Activated B cell treated with CpG ODN at 0.5 μM for 24 hours (primary cell): ENCODE measurements at regions of chr11 and their contacts with region 1.

Region 1: DNA sequence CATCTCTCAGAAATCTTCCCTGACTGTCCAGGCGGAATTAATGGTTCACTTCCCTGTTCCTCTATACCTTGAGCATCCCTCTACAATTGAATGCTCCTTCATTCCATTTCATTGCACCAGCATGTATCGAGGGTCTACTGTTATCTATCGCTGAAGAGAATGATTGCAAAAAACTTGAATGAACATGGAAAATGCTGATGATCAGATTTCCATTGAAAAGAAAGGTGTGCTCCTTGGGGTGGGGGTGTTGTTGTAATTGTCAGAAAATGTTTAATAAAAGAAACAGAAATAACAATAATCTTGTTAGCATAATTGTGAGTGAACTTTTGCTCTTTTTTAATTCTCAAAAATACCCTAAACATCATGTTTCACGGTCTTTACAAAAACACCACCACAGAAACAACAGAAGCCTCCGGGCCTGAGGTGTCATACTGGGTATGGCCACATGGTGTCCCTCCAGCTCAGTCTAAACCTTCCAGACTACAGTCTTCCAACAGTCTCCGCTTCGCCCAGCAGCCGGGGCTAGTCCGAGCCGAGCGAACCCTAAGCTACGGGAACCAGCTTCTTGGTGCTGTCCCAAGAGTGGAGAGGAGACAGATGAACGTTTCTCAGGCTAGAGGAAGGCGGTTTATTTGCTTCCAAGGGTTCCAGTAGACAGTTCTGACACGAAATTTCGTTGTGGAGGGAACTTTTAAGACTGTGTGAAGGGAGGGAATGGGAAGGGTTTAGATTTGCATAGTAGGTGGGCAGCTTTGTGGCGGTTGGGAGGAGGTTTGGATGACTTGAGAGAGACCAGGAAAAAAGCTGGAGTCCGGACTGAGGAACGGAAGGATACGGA is 75.8 kb upstream of the ZBED5 start:
- DNase-seq: peak; percentile 74
- ATAC-seq: peak; percentile 96
- H3K4me3 Mint-ChIP-seq: peak overlapping the region; percentile 82
- H3K27ac Mint-ChIP-seq: peak overlapping the region; percentile 18
- H3K4me1 Mint-ChIP-seq: peaks cover 22% of the 10 kb centered on the region
- H3K27me3 Mint-ChIP-seq: peaks cover 28% of the 10 kb centered on the region
- CTCF ChIP-seq: peak; percentile 72

Region 2: DNA sequence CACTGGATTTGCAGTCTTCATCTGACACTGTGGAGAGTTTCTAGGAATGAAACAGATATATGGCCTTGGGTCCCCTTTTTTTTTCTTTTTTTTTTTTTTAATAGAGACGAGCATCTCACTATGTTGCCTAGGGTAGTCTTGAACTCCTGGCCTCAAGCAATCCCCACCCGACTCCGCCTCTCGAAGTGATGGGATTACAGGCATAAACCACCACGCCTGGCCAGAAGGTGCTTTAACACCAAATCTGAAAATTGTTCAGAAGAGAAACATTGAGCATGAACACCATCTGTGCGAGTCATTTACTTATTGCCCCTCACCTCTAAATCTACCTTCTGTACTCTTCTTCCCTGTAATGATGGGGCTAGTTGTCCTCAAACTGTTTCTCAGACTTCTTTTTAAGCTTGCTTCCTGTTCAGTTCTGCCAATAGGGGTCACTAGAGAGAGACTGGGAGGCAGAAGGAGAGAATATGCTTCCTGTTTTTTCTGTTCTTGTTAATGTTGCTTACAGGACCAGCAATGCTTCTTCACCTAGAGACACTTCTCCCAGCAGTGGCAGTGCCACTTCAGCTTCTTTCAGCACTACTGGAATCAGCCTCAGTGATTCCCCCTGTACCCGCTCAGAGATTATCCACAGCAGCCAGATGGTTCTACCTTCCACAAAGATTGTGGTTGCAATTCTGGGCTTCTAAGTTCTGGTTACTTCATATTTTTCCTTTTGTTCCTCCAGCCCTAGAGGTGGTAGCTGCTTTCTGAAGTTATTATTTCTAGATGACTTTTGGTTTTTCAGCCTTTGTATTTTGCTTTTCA is 55.1 kb before region 1 on chr11:
- CTCF ChIA-PET with region 1: interaction called, 8 read pairs
- POLR2A ChIA-PET with region 1: no interaction called
- intact Hi-C with region 1: loop called (anchors 5 kb)
- DNase-seq: no peak
- ATAC-seq: peak; percentile 84
- H3K4me3 Mint-ChIP-seq: no peak overlapping the region
- H3K27ac Mint-ChIP-seq: no peak overlapping the region
- H3K4me1 Mint-ChIP-seq: peaks cover 13% of the 10 kb centered on the region
- H3K27me3 Mint-ChIP-seq: no peaks in the 10 kb centered on the region
- CTCF ChIP-seq: no peak

Region 3: DNA sequence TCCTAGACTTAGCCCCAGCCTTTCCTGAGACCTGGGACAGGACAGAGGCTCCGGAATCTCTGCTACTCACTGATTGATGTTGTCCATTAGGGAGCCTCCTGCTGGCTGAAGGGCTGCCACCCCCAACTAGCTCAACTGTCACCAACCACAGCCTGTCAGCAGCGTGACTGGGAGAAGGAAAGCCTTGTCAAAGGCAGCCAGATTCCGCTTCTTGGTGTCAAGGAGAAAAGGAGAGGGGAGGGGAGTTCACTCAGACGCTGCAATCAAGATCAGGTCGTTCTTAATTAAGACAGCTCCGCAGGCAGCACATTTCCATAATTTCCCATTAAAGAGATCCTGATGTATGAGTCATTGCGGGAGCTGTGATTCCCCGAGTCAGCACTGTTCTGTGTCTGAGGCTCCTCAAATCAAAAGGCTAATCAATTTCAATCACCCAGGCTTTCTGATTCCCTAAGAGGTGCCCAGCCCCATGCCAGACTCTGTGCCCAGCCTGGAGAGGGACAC is 77.0 kb after region 1 on chr11:
- CTCF ChIA-PET with region 1: interaction called, 25 read pairs
- POLR2A ChIA-PET with region 1: interaction called, 5 read pairs
- intact Hi-C with region 1: no loop called
- DNase-seq: no peak
- ATAC-seq: no peak
- H3K4me3 Mint-ChIP-seq: no peak overlapping the region
- H3K27ac Mint-ChIP-seq: no peak overlapping the region
- H3K4me1 Mint-ChIP-seq: peaks cover 24% of the 10 kb centered on the region
- H3K27me3 Mint-ChIP-seq: peaks cover 8% of the 10 kb centered on the region
- CTCF ChIP-seq: no peak

Region 4: DNA sequence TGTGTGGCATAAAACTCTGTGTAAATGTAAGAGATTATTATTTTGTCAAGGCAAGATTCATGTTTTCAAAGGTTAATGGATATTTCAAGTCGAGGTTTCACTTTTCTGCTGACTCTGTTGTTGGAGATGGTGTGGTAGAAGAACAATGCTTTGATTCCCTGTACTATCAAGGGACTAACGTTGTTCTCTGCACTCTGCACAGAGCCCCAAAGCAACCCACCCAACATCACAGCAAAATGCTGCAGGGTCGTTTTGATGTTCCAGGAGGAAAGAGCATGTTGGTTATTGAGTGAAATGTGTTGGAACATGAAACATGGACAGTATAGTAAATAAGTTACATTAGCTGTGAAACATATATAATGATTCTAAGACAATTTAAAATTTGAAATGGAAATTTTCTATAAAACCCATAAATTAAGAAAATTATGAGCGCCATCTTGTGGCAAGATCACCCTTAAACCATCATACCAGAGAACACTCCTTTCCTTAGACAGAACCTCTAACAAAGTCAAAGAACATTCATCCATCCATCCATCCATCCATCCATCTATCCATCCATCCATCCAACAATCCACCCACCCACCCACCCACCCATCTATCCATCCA is 88.6 kb after region 1 on chr11:
- CTCF ChIA-PET with region 1: interaction called, 97 read pairs
- POLR2A ChIA-PET with region 1: interaction called, 5 read pairs
- intact Hi-C with region 1: loop called (anchors 1 kb)
- DNase-seq: no peak
- ATAC-seq: no peak
- H3K4me3 Mint-ChIP-seq: no peak overlapping the region
- H3K27ac Mint-ChIP-seq: no peak overlapping the region
- H3K4me1 Mint-ChIP-seq: no peaks in the 10 kb centered on the region
- H3K27me3 Mint-ChIP-seq: peaks cover 5% of the 10 kb centered on the region
- CTCF ChIP-seq: peak; percentile 27

Region 5: GRCh38 chr11:11265994-11266606 is 332.4 kb after region 1 on chr11:
- CTCF ChIA-PET with region 1: no interaction called
- POLR2A ChIA-PET with region 1: no interaction called
- intact Hi-C with region 1: loop called (anchors 1 kb)
- DNase-seq: no peak
- ATAC-seq: no peak
- H3K4me3 Mint-ChIP-seq: no peak overlapping the region
- H3K27ac Mint-ChIP-seq: no peak overlapping the region
- H3K4me1 Mint-ChIP-seq: peaks cover 26% of the 10 kb centered on the region
- H3K27me3 Mint-ChIP-seq: no peaks in the 10 kb centered on the region
- CTCF ChIP-seq: no peak

Region 6: DNA sequence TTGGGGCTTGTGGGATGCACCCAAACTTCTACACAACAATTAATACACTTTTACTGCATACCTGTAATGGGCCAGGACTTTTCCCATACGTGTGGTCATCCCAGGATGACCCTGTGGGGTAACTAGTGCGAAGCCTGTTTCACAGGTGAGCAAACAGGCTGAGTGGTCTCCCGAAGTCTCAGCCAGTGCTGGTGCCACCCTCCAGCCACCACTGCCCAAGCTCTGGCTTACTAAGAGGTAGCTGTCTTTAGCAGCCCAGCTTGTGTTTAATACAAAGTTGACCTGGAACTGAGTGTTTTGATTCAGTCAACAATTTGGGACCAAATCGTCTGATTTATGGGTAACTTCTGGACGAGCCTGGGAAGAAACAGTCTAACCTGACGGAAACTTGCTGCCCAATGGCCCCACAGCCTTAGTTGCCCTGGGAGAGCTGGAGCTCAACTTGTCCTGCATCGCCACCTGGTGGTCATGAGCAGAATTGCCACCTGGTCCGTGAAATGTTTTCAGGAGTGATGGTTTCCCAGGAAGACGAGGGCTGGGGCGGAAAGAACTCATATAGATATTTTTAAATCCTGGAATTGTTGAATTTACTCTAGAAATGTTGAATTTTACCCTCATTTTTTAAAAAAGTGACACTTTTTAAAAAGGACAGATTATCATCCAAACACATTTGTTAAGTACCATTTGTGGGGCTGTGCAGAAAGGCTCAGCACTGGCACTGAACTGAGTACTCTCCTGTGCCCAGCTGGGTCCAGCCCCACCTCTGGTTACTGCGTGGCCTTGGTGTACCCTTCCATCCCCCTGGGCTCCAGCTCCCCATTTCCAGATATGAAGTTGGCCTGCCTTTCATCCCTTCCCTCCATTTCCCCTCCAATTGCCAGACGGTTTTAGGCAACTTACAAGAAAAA is 1348.2 kb after region 1 on chr11:
- CTCF ChIA-PET with region 1: no interaction called
- POLR2A ChIA-PET with region 1: no interaction called
- intact Hi-C with region 1: loop called (anchors 10 kb)
- DNase-seq: peak; percentile 45
- ATAC-seq: peak; percentile 57
- H3K4me3 Mint-ChIP-seq: no peak overlapping the region
- H3K27ac Mint-ChIP-seq: no peak overlapping the region
- H3K4me1 Mint-ChIP-seq: no peaks in the 10 kb centered on the region
- H3K27me3 Mint-ChIP-seq: peaks cover 7% of the 10 kb centered on the region
- CTCF ChIP-seq: peak; percentile 89